Aorta (tissue), 5 donors: ENCODE measurements at regions of chr6 and their contacts with region 1.

Region 1: GRCh38 chr6:28683944-28684538 is 158.4 kb downstream of the GPX5 start:
- DNase-seq: no peak
- ATAC-seq: no peak
- H3K4me3 ChIP-seq: no peak overlapping the region
- H3K27ac ChIP-seq: no peak overlapping the region
- H3K4me1 ChIP-seq: no peaks in the 10 kb centered on the region
- H3K27me3 ChIP-seq: peaks cover 0 to 4% of the 10 kb centered on the region in 2 donors

Region 2: GRCh38 chr6:28136585-28137504 is 547.2 kb before region 1 on chr6:
- intact Hi-C with region 1: no loop called
- DNase-seq: peak; percentile 94 to 96
- ATAC-seq: peak; percentile 94
- H3K4me3 ChIP-seq: peak overlapping the region; percentile 88 to 91
- H3K27ac ChIP-seq: peak overlapping the region; percentile 91 to 99
- H3K4me1 ChIP-seq: no peaks in the 10 kb centered on the region
- H3K27me3 ChIP-seq: no peaks in the 10 kb centered on the region

Region 3: GRCh38 chr6:29016559-29017427 is 332.8 kb after region 1 on chr6:
- intact Hi-C with region 1: loop called (anchors 1 to 5 kb)
- DNase-seq: peak; percentile 78 to 89
- ATAC-seq: peak; percentile 93
- H3K4me3 ChIP-seq: peak overlapping the region; percentile 7 to 64
- H3K27ac ChIP-seq: no peak overlapping the region
- H3K4me1 ChIP-seq: no peaks in the 10 kb centered on the region
- H3K27me3 ChIP-seq: no peaks in the 10 kb centered on the region

Region 4: DNA sequence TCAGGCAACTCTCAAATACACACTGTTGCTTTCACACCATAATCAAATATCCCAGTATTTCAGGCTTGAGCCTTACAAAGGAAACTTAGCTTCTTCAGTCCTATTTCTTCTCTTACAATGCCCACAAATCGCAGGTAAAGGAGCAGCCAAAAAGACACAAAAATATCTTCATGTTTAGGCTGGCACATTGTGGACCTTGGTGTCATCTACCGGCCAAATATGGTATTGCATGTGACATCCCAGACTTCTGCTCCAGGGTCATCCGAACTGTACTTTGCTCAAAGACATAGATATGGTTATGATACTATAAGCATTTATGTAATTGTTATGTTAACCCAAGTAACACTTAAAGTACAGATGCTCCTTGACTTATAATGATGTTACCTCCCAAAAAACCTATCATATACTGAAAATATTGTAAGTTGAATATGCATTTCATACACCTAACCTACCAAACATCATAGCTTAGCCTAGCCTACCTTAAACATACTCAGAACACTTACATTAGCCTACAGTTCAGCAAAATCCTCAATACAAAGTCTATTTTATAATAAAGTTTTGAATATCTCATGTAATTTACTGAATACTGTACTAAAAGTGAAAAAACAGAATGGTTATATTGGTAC is 905.5 kb after region 1 on chr6:
- intact Hi-C with region 1: loop called in 1 of 2 experiments (anchors 10 kb)
- DNase-seq: no peak
- ATAC-seq: peak; percentile 70
- H3K4me3 ChIP-seq: no peak overlapping the region
- H3K27ac ChIP-seq: no peak overlapping the region
- H3K4me1 ChIP-seq: no peaks in the 10 kb centered on the region
- H3K27me3 ChIP-seq: no peaks in the 10 kb centered on the region

Region 5: DNA sequence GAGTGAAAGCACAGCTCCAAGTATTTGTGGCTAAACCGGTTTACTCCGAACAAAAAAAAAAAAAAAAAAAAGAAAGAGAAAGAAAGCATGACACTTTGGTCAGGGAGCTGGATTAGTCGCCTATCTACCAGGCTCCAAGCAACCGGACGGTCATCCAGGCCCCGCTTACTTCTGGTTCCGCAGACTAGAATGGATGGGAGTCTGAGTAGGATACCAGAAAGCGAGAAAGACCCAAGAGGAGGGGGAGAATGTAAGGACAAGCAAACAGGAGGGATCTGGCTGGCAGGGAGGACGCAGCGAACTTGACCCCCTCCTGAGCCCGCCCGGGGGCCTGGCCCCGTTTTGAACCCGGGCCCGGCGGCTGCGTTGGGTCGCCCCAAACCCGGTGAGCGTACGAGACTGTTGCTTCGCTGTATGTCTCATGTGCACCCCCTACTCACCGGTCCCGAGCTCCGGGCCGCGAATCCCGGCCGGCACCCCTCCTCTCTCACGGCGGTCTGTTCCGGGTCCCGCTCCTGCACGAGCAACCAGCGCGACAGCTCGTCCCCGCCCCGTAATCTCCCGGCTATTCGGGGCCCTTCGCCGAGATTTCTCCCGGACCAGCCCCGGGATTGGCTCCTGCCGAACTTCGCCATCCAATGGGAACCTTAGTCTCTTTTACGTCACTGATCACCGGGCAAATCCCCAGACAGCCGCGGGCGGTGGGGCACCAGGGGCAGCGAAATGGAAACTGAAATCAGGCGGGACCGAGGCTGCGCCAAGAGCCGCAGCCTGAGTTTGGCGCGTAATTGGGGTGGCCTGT is 1529.0 kb after region 1 on chr6 and contains the start of gene TRIM26:
- intact Hi-C with region 1: no loop called
- DNase-seq: peak; percentile 98
- ATAC-seq: peak; percentile 98
- H3K4me3 ChIP-seq: peak within 1 kb of the TSS; percentile 74 to 83
- H3K27ac ChIP-seq: peak within 1 kb of the TSS; percentile 78 to 83
- H3K4me1 ChIP-seq: peaks cover 0 to 6% of the 10 kb centered on the region in 2 donors
- H3K27me3 ChIP-seq: no peaks in the 10 kb centered on the region
- total RNA-seq, gene TRIM26: 35.1 to 36.5 TPM